ENCODE measurements at regions of chr15 and their contacts with region 1.

Region 1: GRCh38 chr15:70023064-70023768 is 74.5 kb downstream of the TLE3 start:
- DNase-seq: peak; percentile 7
- H3K4me3 ChIP-seq: no peak overlapping the region
- H3K27ac ChIP-seq: peak overlapping the region; percentile 50 to 58
- H3K4me1 ChIP-seq: peaks cover 13% of the 10 kb centered on the region
- H3K27me3 ChIP-seq: no peaks in the 10 kb centered on the region
- CTCF ChIP-seq: no peak
- POLR2A ChIP-seq: no peak

Region 2: DNA sequence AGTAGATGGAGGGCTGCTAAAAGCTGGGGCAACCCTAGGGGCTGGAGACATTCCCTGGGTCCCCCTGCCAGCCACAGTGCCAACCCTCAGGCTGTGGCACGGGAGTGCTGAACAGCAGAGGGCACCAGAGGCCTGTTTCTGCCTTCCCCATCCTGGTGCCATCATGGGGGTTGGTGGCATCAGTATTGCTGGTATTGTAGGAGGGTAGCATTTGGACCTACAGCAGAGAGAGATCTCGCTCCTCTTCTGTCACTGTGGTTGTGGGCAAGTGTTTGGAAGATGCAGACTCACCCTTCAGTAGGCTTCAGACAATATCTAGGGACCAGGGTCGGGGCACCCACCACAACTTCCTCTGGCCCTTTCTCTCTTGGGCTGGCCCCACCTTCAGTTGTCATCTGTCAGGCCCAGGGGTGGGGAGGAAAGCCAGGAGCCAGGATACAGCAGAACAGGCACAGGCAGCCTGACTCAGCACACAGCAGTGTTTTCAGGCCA is 447.1 kb before region 1 on chr15:
- intact Hi-C with region 1: loop called (anchors 5 kb)
- DNase-seq: peak; percentile 53
- H3K4me3 ChIP-seq: no peak overlapping the region
- H3K27ac ChIP-seq: no peak overlapping the region
- H3K4me1 ChIP-seq: peaks cover 5% of the 10 kb centered on the region
- H3K27me3 ChIP-seq: no peaks in the 10 kb centered on the region
- CTCF ChIP-seq: peak; percentile 57 to 92 (median 79)
- POLR2A ChIP-seq: no peak

Region 3: GRCh38 chr15:70088887-70089691 is 65.9 kb after region 1 on chr15:
- intact Hi-C with region 1: loop called (anchors 5 kb)
- DNase-seq: no peak
- H3K4me3 ChIP-seq: peak overlapping the region in 1 of 2 donors; percentile 2
- H3K27ac ChIP-seq: peak overlapping the region; percentile 14 to 41
- H3K4me1 ChIP-seq: peaks cover 37% of the 10 kb centered on the region
- H3K27me3 ChIP-seq: no peaks in the 10 kb centered on the region
- CTCF ChIP-seq: no peak
- POLR2A ChIP-seq: no peak